B cell (primary cell): ENCODE measurements at regions of chr1 and their contacts with region 1.

Region 1: GRCh38 chr1:70410604-70411359 is at the start of gene CTH:
- DNase-seq: peak; percentile 95
- ATAC-seq: peak; percentile 96
- H3K4me3 ChIP-seq: peak within 1 kb of the TSS; percentile 72 to 98 (median 84)
- H3K4me3 Mint-ChIP-seq: peak within 1 kb of the TSS; percentile 91
- H3K27ac ChIP-seq: peak within 1 kb of the TSS; percentile 90 to 94
- H3K27ac Mint-ChIP-seq: peak within 1 kb of the TSS; percentile 98
- H3K4me1 ChIP-seq: peaks cover 13 to 24% of the 10 kb centered on the region in 2 donors
- H3K4me1 Mint-ChIP-seq: peaks cover 24% of the 10 kb centered on the region
- H3K27me3 ChIP-seq: no peaks in the 10 kb centered on the region
- H3K27me3 Mint-ChIP-seq: peaks cover 11% of the 10 kb centered on the region
- CTCF ChIP-seq: no peak
- total RNA-seq, gene CTH: 3.9 and 4.9 TPM in 2 replicates

Region 2: GRCh38 chr1:69485616-69486015 is 925.2 kb before region 1 on chr1:
- CTCF ChIA-PET with region 1: no interaction called
- POLR2A ChIA-PET with region 1: no interaction called
- intact Hi-C with region 1: no loop called
- DNase-seq: no peak
- ATAC-seq: no peak
- H3K4me3 ChIP-seq: no peak overlapping the region
- H3K4me3 Mint-ChIP-seq: no peak overlapping the region
- H3K27ac ChIP-seq: no peak overlapping the region
- H3K27ac Mint-ChIP-seq: no peak overlapping the region
- H3K4me1 ChIP-seq: no peaks in the 10 kb centered on the region
- H3K4me1 Mint-ChIP-seq: no peaks in the 10 kb centered on the region
- H3K27me3 ChIP-seq: no peaks in the 10 kb centered on the region
- H3K27me3 Mint-ChIP-seq: no peaks in the 10 kb centered on the region
- CTCF ChIP-seq: no peak

Region 3: DNA sequence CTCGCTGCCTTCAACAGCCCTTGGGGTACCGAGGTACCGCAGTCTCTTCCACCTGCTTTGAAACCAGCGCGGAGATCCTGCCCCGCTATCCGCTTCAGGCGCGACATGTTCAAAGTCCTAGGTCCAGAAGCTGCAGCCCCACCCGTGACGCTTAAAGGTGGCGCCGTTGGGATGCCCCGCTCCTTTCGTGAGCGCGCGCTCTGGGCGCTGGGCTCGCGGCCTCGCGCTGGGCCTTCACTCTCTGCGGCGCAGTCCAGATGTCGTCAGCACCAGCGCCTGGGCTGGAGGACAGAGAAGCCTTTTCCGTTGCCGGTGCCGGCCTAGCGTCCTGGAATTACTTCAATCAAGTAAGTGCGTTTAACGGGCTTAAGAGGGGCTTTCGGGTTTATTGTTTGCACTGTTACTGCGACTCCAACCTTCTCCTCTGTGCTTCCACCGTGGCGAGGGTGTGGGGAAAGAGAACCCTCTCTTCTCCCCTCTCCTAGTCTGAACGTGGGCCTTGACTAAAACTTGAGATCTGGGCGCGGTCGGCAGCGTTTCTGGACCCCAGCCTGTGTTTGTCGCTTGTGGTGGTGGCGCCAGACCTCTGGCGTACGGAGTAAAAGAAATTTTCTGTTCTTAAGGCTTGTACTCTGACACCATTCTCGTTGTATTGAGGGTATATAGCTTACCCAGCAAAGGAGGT is 205.2 kb before region 1 on chr1 and contains the start of gene LRRC40:
- CTCF ChIA-PET with region 1: no interaction called
- POLR2A ChIA-PET with region 1: interaction called, 5 read pairs
- intact Hi-C with region 1: loop called (anchors 1 kb)
- DNase-seq: peak; percentile 96
- ATAC-seq: peak; percentile 96
- H3K4me3 ChIP-seq: peak within 1 kb of the TSS; percentile 63 to 93 (median 91)
- H3K4me3 Mint-ChIP-seq: peak within 1 kb of the TSS; percentile 98
- H3K27ac ChIP-seq: peak within 1 kb of the TSS; percentile 86 to 92
- H3K27ac Mint-ChIP-seq: peak within 1 kb of the TSS; percentile 98
- H3K4me1 ChIP-seq: peaks cover 18 to 30% of the 10 kb centered on the region in 2 donors
- H3K4me1 Mint-ChIP-seq: peaks cover 66% of the 10 kb centered on the region
- H3K27me3 ChIP-seq: no peaks in the 10 kb centered on the region
- H3K27me3 Mint-ChIP-seq: no peaks in the 10 kb centered on the region
- CTCF ChIP-seq: no peak
- total RNA-seq, gene LRRC40: 14.5 and 14.6 TPM in 2 replicates

Region 4: DNA sequence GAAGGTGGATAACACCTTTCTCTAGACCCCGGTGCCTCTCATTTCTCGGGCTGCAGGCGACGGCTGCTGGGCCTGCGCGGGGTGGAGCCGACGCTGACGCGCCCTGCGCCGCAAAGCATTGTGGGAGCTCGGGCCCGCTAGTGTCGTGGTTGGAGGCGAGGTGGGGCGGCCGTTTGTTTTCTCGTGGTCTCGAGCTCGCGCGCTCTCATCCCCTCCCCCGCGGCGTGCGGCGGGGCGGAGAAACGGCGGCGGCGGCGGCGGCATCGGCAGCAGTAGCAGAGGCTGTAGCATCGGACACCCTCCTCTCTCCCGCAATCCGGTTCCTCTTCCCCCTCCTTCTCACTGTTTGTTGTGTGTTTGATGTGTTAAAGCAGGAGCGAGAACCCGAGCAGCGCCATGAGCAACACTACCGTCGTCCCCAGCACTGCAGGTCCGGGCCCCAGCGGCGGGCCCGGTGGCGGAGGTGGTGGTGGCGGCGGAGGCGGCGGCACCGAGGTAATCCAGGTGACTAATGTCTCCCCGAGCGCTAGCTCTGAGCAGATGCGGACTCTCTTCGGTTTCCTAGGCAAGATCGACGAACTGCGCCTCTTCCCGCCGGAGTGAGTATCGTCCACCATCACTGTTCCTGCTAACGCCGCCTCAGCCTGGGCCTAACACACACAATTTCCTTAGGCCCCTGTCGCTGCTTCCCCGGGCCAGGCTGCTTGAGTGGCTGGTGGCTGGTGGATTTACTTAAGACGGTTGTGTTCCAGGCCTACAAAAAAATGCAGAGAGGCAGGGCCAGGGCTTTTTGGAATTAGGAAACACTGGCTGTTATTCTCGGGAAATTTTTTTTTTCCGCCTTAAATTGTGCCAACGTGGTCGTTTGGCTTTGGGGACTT is 189.3 kb before region 1 on chr1 and contains the start of gene SRSF11:
- CTCF ChIA-PET with region 1: no interaction called
- POLR2A ChIA-PET with region 1: interaction called, 4 read pairs
- intact Hi-C with region 1: loop called (anchors 1 kb)
- DNase-seq: peak; percentile 97
- ATAC-seq: peak; percentile 96
- H3K4me3 ChIP-seq: peak within 1 kb of the TSS; percentile 69 to 81 (median 79)
- H3K4me3 Mint-ChIP-seq: peak within 1 kb of the TSS; percentile 93
- H3K27ac ChIP-seq: peak within 1 kb of the TSS; percentile 94
- H3K27ac Mint-ChIP-seq: peak within 1 kb of the TSS; percentile 97
- H3K4me1 ChIP-seq: peaks cover 11 to 25% of the 10 kb centered on the region in 2 donors
- H3K4me1 Mint-ChIP-seq: peaks cover 47% of the 10 kb centered on the region
- H3K27me3 ChIP-seq: no peaks in the 10 kb centered on the region
- H3K27me3 Mint-ChIP-seq: no peaks in the 10 kb centered on the region
- CTCF ChIP-seq: no peak
- total RNA-seq, gene SRSF11: 322 and 333 TPM in 2 replicates

Region 5: GRCh38 chr1:70573317-70573843 is 162.6 kb after region 1 on chr1:
- CTCF ChIA-PET with region 1: no interaction called
- POLR2A ChIA-PET with region 1: no interaction called
- intact Hi-C with region 1: no loop called
- DNase-seq: no peak
- ATAC-seq: no peak
- H3K4me3 ChIP-seq: no peak overlapping the region
- H3K4me3 Mint-ChIP-seq: no peak overlapping the region
- H3K27ac ChIP-seq: no peak overlapping the region
- H3K27ac Mint-ChIP-seq: no peak overlapping the region
- H3K4me1 ChIP-seq: no peaks in the 10 kb centered on the region
- H3K4me1 Mint-ChIP-seq: no peaks in the 10 kb centered on the region
- H3K27me3 ChIP-seq: no peaks in the 10 kb centered on the region
- H3K27me3 Mint-ChIP-seq: no peaks in the 10 kb centered on the region
- CTCF ChIP-seq: no peak